Activated T-helper 1 cell treated with anti-CD3 and anti-CD28 coated beads, Interleukin-12 subunit alpha, Interleukin-12 subunit beta, Interleukin-2, Interleukin-4 antibody, amounts not matched to agents 30 ng/mL and 10 ng/mL and 1 ng/mL, durations not matched to agents 14 hours and 24 hours and 36 hours (primary cell): ENCODE measurements at regions of chr2 and their contacts with region 1.

Region 1: DNA sequence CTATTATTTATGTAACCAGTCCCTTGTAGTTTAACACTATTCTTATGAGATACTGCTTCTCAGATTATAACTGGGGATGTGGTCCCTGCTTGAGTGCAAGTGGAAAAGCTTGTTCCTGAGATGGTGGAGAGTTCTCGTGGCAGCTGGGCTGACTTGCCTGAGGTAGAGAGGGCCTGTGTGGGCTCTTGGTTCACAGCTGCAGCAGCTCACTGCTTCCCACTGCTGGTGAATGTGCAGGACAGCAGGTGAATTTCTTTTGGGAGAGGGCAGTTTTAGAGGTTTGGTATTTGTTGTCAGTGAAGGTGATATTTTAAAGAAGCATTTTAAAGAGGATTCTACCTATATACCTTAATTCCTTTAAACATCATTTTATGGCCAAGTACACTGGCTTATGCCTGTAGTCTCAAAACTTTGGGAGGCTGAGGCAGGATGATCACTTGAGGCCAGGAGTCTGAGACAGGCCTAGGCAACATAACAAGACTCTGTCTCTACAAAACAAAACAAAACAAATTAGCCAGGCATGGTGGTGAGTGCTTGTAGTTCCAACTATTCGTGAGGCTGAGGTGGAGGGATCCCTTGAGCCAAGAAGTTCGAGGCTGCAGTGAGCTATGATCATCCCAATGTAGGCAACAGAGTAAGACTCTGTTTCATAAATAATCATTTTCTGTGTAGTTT is 94.8 kb downstream of the MTA3 start:
- DNase-seq: peak; percentile 40
- H3K4me3 Mint-ChIP-seq: no peak overlapping the region
- H3K27ac Mint-ChIP-seq: no peak overlapping the region
- H3K4me1 Mint-ChIP-seq: peaks cover 13% of the 10 kb centered on the region
- H3K27me3 Mint-ChIP-seq: no peaks in the 10 kb centered on the region

Region 2: GRCh38 chr2:41869542-41870264 is 793.5 kb before region 1 on chr2:
- intact Hi-C with region 1: loop called (anchors 10 kb)
- DNase-seq: peak; percentile 32
- H3K4me3 Mint-ChIP-seq: no peak overlapping the region
- H3K27ac Mint-ChIP-seq: no peak overlapping the region
- H3K4me1 Mint-ChIP-seq: no peaks in the 10 kb centered on the region
- H3K27me3 Mint-ChIP-seq: peaks cover 12% of the 10 kb centered on the region

Region 3: GRCh38 chr2:42095923-42096408 is 567.3 kb before region 1 on chr2:
- intact Hi-C with region 1: loop called (anchors 10 kb)
- DNase-seq: peak; percentile 46
- H3K4me3 Mint-ChIP-seq: no peak overlapping the region
- H3K27ac Mint-ChIP-seq: no peak overlapping the region
- H3K4me1 Mint-ChIP-seq: peaks cover 46% of the 10 kb centered on the region
- H3K27me3 Mint-ChIP-seq: peaks cover 18% of the 10 kb centered on the region

Region 4: GRCh38 chr2:42494355-42495233 is 168.6 kb before region 1 on chr2:
- intact Hi-C with region 1: loop called (anchors 1 kb)
- DNase-seq: peak; percentile 57
- H3K4me3 Mint-ChIP-seq: peak overlapping the region; percentile 89
- H3K27ac Mint-ChIP-seq: peak overlapping the region; percentile 82
- H3K4me1 Mint-ChIP-seq: peaks cover 9% of the 10 kb centered on the region
- H3K27me3 Mint-ChIP-seq: peaks cover 40% of the 10 kb centered on the region

Region 5: DNA sequence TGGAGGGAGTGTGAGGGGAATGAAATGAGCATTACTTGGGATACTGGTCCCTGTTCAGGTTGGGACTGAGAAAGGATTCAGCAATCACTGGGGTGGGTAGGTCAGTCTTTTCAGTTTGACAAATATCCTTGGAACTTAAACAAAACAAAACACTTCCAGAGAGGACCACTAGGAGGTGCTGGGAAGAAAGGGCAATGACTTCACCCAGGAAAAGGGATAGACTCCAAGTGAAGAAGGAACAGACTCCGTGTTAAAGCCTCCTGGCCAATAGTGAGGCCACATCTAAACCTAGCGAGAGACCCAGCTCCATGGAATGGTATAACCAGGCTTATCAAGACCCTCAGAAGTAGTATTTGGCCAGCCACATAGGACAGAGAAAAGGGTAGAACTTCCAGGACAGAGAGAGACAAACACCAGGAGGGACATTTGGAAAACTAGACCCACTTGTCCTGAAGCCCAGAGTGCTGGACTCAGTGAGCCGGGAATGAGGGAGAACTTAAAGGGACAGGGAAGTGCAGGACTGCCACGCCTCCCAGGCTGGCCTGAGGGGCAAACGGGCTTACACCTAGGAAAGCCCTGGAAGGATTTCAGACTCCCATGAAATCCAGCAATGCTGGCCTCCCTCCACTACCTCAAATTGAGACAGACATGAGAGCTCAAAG is 149.9 kb before region 1 on chr2:
- intact Hi-C with region 1: loop called (anchors 1 kb)
- DNase-seq: no peak
- H3K4me3 Mint-ChIP-seq: no peak overlapping the region
- H3K27ac Mint-ChIP-seq: no peak overlapping the region
- H3K4me1 Mint-ChIP-seq: peaks cover 9% of the 10 kb centered on the region
- H3K27me3 Mint-ChIP-seq: peaks cover 6% of the 10 kb centered on the region

Region 6: GRCh38 chr2:42547014-42547413 is 116.2 kb before region 1 on chr2:
- intact Hi-C with region 1: no loop called
- DNase-seq: no peak
- H3K4me3 Mint-ChIP-seq: no peak overlapping the region
- H3K27ac Mint-ChIP-seq: no peak overlapping the region
- H3K4me1 Mint-ChIP-seq: no peaks in the 10 kb centered on the region
- H3K27me3 Mint-ChIP-seq: peaks cover 2% of the 10 kb centered on the region

Region 7: GRCh38 chr2:42568401-42569115 is 94.7 kb before region 1 on chr2 and contains the start of gene MTA3:
- intact Hi-C with region 1: loop called (anchors 5 kb)
- DNase-seq: peak; percentile 54
- H3K4me3 Mint-ChIP-seq: peak within 1 kb of the TSS; percentile 92
- H3K27ac Mint-ChIP-seq: peak within 1 kb of the TSS; percentile 96
- H3K4me1 Mint-ChIP-seq: peaks cover 20% of the 10 kb centered on the region
- H3K27me3 Mint-ChIP-seq: peaks cover 3% of the 10 kb centered on the region
- total RNA-seq, gene MTA3: 29.4 and 31.1 TPM in 2 replicates

Region 8: DNA sequence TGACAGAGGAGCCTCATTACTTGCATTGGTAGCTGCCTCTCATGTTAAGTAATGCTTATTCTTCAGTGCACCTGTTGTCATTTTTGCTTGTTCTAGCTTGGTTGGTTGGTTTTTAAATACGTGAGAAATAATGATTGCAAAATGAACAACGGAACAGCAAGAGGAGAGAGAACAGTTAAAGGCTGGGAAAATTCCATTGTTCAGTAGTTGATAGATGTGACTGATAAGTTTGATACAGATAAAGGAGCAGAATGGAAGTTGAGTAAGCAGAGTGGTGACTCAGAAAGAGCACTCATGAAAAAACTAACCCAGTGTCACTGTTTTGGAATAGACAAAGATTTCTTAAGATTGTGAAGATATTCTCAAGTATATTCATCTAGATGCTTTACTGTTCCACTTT is 44.3 kb before region 1 on chr2:
- intact Hi-C with region 1: no loop called
- DNase-seq: no peak
- H3K4me3 Mint-ChIP-seq: no peak overlapping the region
- H3K27ac Mint-ChIP-seq: peak overlapping the region; percentile 52
- H3K4me1 Mint-ChIP-seq: peaks cover 9% of the 10 kb centered on the region
- H3K27me3 Mint-ChIP-seq: no peaks in the 10 kb centered on the region